ENCODE measurements at regions of chr2 and their contacts with region 1.

Region 1: GRCh38 chr2:189952536-189953109 is 109.9 kb downstream of the MSTN start:
- H3K4me3 Mint-ChIP-seq: no peak overlapping the region
- H3K27ac Mint-ChIP-seq: no peak overlapping the region
- H3K4me1 Mint-ChIP-seq: peaks cover 26% of the 10 kb centered on the region
- H3K27me3 Mint-ChIP-seq: no peaks in the 10 kb centered on the region

Region 2: GRCh38 chr2:189798312-189799029 is 154.2 kb before region 1 on chr2:
- intact Hi-C with region 1: loop called (anchors 10 kb)
- H3K4me3 Mint-ChIP-seq: no peak overlapping the region
- H3K27ac Mint-ChIP-seq: peak overlapping the region; percentile 37
- H3K4me1 Mint-ChIP-seq: peaks cover 17% of the 10 kb centered on the region
- H3K27me3 Mint-ChIP-seq: no peaks in the 10 kb centered on the region